Tibial artery (tissue), 4 donors: ENCODE measurements at regions of chr18 and their contacts with region 1.

Region 1: DNA sequence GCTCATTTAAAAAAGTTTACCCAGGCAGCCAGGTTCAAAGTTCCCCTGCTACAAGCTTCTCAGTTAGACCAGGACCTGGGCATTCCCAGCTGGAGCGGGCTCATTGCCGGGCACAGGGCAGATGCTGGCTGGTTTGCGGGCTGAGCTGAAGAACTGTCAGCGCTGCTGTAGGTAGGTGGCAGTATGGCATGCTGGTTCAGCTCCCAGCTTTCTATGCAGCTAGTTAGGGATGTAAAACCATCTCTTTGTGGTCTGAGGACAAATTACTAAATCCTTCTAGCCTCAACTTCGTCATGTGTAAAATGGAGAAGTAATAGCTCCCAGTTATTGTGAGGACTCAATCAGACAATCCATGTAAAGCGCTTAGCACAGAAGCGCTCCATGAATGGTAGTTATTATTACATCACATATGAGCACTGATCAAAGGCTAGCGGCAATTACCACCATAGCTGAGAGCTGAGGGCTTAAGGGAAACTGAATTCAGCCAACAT is 2.4 kb upstream of the LDLRAD4 start:
- DNase-seq: peak; percentile 78 to 87
- H3K4me3 ChIP-seq: peak overlapping the region; percentile 86 to 95
- H3K27ac ChIP-seq: peak overlapping the region; percentile 89
- H3K4me1 ChIP-seq: peaks cover 6 to 32% (median 24%) of the 10 kb centered on the region in 4 donors
- H3K27me3 ChIP-seq: no peaks in the 10 kb centered on the region
- CTCF ChIP-seq: peak; percentile 82 to 83

Region 2: DNA sequence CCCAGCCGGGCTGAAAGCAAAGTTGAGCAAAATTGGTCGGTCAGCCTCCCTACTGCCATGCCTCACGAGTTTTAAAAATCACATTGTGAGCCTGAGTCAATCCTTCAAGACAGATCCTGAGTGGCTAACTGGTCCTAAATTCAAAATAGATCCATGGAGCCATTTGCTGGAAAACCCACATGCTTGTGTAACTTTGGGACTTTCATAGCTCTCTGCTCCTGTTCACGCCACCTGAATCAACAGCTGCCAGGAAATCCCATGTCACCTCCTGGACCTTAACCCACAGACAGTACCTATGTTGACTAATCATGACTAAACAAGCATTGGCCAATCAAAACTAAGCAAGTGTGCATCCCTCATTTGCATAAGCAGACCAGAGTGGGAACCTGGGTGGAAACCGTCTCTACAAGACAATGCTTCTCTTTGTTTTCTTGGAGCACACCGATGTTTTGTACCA is 40.4 kb before region 1 on chr18:
- intact Hi-C with region 1: no loop called
- DNase-seq: no peak
- H3K4me3 ChIP-seq: no peak overlapping the region
- H3K27ac ChIP-seq: no peak overlapping the region
- H3K4me1 ChIP-seq: peaks cover 0 to 11% (median 0%) of the 10 kb centered on the region in 4 donors
- H3K27me3 ChIP-seq: no peaks in the 10 kb centered on the region
- CTCF ChIP-seq: no peak

Region 3: GRCh38 chr18:13260197-13260934 is 44.2 kb after region 1 on chr18:
- intact Hi-C with region 1: loop called (anchors 5 kb)
- DNase-seq: peak in 1 of 2 donors; percentile 60
- H3K4me3 ChIP-seq: peak overlapping the region in 1 of 2 donors; percentile 9
- H3K27ac ChIP-seq: peak overlapping the region; percentile 71 to 77
- H3K4me1 ChIP-seq: peaks cover 7 to 72% (median 64%) of the 10 kb centered on the region in 4 donors
- H3K27me3 ChIP-seq: no peaks in the 10 kb centered on the region
- CTCF ChIP-seq: no peak

Region 4: DNA sequence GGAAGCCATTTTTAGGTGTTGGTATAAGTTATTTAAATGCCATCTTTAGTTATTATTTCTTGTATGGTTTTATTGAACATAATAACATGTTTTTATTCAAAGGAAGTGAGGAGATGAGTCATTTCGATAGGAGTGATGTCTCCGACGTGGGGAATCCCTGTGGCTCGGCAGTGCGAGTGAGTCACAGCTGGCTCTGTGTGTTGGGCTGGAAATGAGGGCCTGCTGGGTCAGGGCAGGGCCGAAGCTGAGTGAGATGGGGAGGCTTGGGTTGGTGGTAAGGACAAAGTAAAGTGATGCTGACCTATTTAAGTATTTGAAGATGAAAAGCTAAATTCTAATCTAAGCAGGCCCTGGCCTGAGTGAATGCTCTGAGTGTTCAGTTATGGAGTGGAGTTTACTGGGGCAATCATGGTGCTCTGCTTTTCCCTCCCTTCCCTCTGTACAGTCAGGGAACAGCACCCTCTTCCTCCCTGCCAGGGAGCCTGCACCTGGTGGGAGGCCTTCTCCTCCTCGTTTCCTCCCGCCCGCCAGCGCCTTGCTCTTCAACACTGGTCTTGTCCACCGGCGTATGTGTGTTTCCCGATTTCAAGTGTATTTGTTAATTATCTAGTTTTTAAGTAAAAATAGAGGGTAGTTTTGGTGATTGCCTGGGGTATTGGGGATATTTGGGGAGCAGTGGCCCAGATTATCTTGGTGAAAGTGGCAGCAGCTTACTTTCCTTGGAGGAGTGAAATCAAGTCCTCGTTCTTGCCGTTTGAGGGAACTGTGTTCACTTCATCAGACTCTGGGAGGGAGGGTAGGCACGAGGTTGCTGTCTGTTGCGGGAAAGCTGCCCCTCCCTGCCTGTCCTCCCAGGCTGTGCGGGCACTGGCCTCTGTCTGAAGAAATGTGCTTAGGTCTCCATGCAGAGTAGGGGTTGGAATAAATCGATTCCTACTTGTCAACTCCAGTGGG is 159.4 kb after region 1 on chr18:
- intact Hi-C with region 1: loop called (anchors 5 kb)
- DNase-seq: peak; percentile 89 to 90
- H3K4me3 ChIP-seq: peak overlapping the region in 1 of 2 donors; percentile 18
- H3K27ac ChIP-seq: peak overlapping the region; percentile 69 to 71
- H3K4me1 ChIP-seq: peaks cover 4 to 46% (median 33%) of the 10 kb centered on the region in 4 donors
- H3K27me3 ChIP-seq: no peaks in the 10 kb centered on the region
- CTCF ChIP-seq: no peak

Region 5: GRCh38 chr18:13532406-13533075 is 316.4 kb after region 1 on chr18:
- intact Hi-C with region 1: loop called (anchors 2 kb)
- DNase-seq: no peak
- H3K4me3 ChIP-seq: no peak overlapping the region
- H3K27ac ChIP-seq: no peak overlapping the region
- H3K4me1 ChIP-seq: peaks cover 0 to 10% (median 6%) of the 10 kb centered on the region in 4 donors
- H3K27me3 ChIP-seq: no peaks in the 10 kb centered on the region
- CTCF ChIP-seq: no peak

Region 6: GRCh38 chr18:13629841-13630715 is 413.9 kb after region 1 on chr18:
- intact Hi-C with region 1: loop called (anchors 5 kb)
- DNase-seq: peak in 1 of 2 donors; percentile 53
- H3K4me3 ChIP-seq: no peak overlapping the region
- H3K27ac ChIP-seq: peak overlapping the region in 1 of 2 donors; percentile 2
- H3K4me1 ChIP-seq: peaks cover 0 to 5% (median 0%) of the 10 kb centered on the region in 4 donors
- H3K27me3 ChIP-seq: no peaks in the 10 kb centered on the region
- CTCF ChIP-seq: peak; percentile 64 to 78